B cell (primary cell): ENCODE measurements at regions of chr3 and their contacts with region 1.

Region 1: GRCh38 chr3:143414571-143415253 is 295.1 kb downstream of the CHST2 start:
- DNase-seq: no peak
- ATAC-seq: no peak
- H3K4me3 ChIP-seq: no peak overlapping the region
- H3K4me3 Mint-ChIP-seq: peak overlapping the region; percentile 18
- H3K27ac ChIP-seq: no peak overlapping the region
- H3K27ac Mint-ChIP-seq: peak overlapping the region; percentile 15
- H3K4me1 ChIP-seq: peaks cover 24 to 30% of the 10 kb centered on the region in 2 donors
- H3K4me1 Mint-ChIP-seq: peaks cover 42% of the 10 kb centered on the region
- H3K27me3 ChIP-seq: no peaks in the 10 kb centered on the region
- H3K27me3 Mint-ChIP-seq: no peaks in the 10 kb centered on the region
- CTCF ChIP-seq: no peak

Region 2: GRCh38 chr3:142925140-142925539 is 489.6 kb before region 1 on chr3:
- CTCF ChIA-PET with region 1: no interaction called
- POLR2A ChIA-PET with region 1: no interaction called
- intact Hi-C with region 1: no loop called
- DNase-seq: no peak
- ATAC-seq: no peak
- H3K4me3 ChIP-seq: no peak overlapping the region
- H3K4me3 Mint-ChIP-seq: no peak overlapping the region
- H3K27ac ChIP-seq: no peak overlapping the region
- H3K27ac Mint-ChIP-seq: no peak overlapping the region
- H3K4me1 ChIP-seq: no peaks in the 10 kb centered on the region
- H3K4me1 Mint-ChIP-seq: no peaks in the 10 kb centered on the region
- H3K27me3 ChIP-seq: peaks cover 0 to 14% (median 6%) of the 10 kb centered on the region in 4 experiments
- H3K27me3 Mint-ChIP-seq: peaks cover 49% of the 10 kb centered on the region
- CTCF ChIP-seq: no peak

Region 3: DNA sequence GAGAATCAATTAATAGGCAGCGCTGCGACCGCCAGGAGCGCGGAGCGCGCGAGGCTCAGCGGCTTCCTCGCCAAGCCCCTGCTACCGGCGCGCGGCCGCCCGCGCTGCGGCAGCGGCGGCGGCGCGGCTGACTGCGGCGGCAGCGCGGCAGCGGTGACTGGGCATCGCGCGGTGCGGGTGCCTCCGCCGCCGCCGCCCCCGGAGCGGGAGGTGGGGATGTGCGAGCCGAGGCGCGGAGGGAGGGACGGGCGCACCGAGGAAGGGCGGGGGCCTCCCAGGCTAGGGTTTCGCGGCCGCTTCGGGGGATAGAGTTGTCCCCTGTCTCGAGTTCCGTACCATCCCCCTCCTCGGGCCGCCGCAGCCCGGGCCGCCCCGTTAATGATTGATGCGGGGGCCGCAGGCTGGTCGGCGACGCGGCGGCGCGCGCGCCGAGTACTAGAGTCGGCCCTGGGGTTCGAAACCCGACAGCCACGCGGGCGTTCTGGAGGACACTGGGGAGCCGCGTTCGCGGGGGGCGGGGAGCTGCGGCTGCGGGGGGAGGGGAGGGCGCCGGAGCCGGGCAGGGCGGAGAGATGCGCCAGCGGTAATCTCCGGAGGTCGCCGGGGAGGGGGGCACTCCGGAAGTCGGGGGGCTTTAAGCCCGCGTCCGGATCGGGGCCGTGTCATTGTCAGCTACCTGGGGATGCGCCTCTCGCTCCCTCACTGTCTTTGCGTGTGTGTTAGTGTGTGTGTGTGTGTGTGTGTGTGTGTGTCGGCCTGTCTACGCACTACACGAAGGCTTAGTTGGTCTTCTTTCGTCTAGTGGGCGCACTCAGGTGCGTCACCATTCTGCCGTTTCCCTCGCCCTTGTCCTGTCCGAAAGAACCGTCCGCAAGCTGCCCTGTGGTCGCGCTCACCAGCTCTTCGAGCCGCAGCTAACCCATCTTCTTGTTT is 450.9 kb before region 1 on chr3 and contains the start of gene PAQR9:
- CTCF ChIA-PET with region 1: no interaction called
- POLR2A ChIA-PET with region 1: no interaction called
- intact Hi-C with region 1: no loop called
- DNase-seq: peak; percentile 32
- ATAC-seq: no peak
- H3K4me3 ChIP-seq: peak within 1 kb of the TSS in 3 of 5 experiments; percentile 30 to 52 (median 47)
- H3K4me3 Mint-ChIP-seq: peak within 1 kb of the TSS; percentile 88
- H3K27ac ChIP-seq: no peak within 1 kb of the TSS
- H3K27ac Mint-ChIP-seq: no peak within 1 kb of the TSS
- H3K4me1 ChIP-seq: peaks cover 8 to 10% of the 10 kb centered on the region in 2 donors
- H3K4me1 Mint-ChIP-seq: peaks cover 14% of the 10 kb centered on the region
- H3K27me3 ChIP-seq: peaks cover 0 to 33% (median 29%) of the 10 kb centered on the region in 4 experiments
- H3K27me3 Mint-ChIP-seq: peaks cover 60% of the 10 kb centered on the region
- CTCF ChIP-seq: no peak
- total RNA-seq, gene PAQR9: not detected in 2 replicates

Region 4: DNA sequence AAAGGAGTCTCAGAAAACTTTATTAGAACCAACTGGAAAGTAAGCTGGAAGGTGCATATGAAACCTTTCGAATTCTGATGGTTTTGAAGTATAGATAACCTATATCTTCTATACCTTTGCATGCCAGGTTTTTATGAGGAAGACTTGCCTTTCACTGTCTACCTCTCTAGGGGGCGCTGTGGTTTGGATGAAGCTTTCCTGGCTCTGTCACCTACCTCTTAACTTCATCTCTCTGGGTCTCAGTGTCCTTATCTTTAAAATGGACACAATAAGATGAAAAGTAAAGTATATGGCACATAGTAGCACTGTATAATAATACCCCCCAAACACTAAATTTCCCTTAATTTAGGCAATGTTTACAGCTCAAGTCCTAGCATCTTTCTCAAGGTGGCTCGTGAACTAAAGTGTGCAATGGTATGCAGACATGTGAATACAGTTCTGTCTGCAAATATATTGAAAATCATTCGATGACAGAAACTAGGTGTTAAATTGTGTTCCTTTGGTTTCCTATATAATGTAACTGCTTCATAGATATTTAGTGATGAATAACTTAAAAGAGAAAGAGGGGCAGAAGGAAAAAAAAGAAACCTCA is 19.2 kb after region 1 on chr3:
- CTCF ChIA-PET with region 1: no interaction called
- POLR2A ChIA-PET with region 1: no interaction called
- intact Hi-C with region 1: no loop called
- DNase-seq: peak; percentile 34
- ATAC-seq: no peak
- H3K4me3 ChIP-seq: no peak overlapping the region
- H3K4me3 Mint-ChIP-seq: no peak overlapping the region
- H3K27ac ChIP-seq: no peak overlapping the region
- H3K27ac Mint-ChIP-seq: no peak overlapping the region
- H3K4me1 ChIP-seq: peaks cover 17% of the 10 kb centered on the region in 2 donors
- H3K4me1 Mint-ChIP-seq: peaks cover 25% of the 10 kb centered on the region
- H3K27me3 ChIP-seq: no peaks in the 10 kb centered on the region
- H3K27me3 Mint-ChIP-seq: no peaks in the 10 kb centered on the region
- CTCF ChIP-seq: peak; percentile 58

Region 5: DNA sequence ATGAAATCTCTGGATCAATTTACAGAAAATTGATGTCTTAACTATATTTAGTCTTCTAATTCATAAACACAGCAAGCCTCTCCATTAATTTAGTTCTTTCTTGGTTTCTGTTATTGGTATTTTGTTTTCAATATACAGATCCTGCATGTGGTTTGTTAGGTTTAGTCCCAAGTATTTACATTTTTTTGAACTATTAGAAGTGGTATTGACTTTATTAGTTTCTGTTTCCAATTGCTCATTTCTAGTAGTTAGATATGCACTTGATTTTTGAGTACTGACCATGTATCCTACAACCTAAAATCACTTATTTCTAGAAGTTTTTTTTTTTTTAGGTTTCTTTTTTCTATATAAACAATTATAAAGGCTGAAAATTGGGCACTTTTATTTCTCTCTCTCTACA is 40.8 kb after region 1 on chr3:
- CTCF ChIA-PET with region 1: no interaction called
- POLR2A ChIA-PET with region 1: no interaction called
- intact Hi-C with region 1: loop called (anchors 5 kb)
- DNase-seq: no peak
- ATAC-seq: no peak
- H3K4me3 ChIP-seq: no peak overlapping the region
- H3K4me3 Mint-ChIP-seq: no peak overlapping the region
- H3K27ac ChIP-seq: no peak overlapping the region
- H3K27ac Mint-ChIP-seq: no peak overlapping the region
- H3K4me1 ChIP-seq: peaks cover 0 to 7% of the 10 kb centered on the region in 2 donors
- H3K4me1 Mint-ChIP-seq: peaks cover 11% of the 10 kb centered on the region
- H3K27me3 ChIP-seq: no peaks in the 10 kb centered on the region
- H3K27me3 Mint-ChIP-seq: no peaks in the 10 kb centered on the region
- CTCF ChIP-seq: no peak

Region 6: GRCh38 chr3:143507735-143508580 is 93.2 kb after region 1 on chr3:
- CTCF ChIA-PET with region 1: no interaction called
- POLR2A ChIA-PET with region 1: no interaction called
- intact Hi-C with region 1: loop called (anchors 5 kb)
- DNase-seq: no peak
- ATAC-seq: no peak
- H3K4me3 ChIP-seq: no peak overlapping the region
- H3K4me3 Mint-ChIP-seq: no peak overlapping the region
- H3K27ac ChIP-seq: no peak overlapping the region
- H3K27ac Mint-ChIP-seq: no peak overlapping the region
- H3K4me1 ChIP-seq: no peaks in the 10 kb centered on the region
- H3K4me1 Mint-ChIP-seq: peaks cover 3% of the 10 kb centered on the region
- H3K27me3 ChIP-seq: no peaks in the 10 kb centered on the region
- H3K27me3 Mint-ChIP-seq: no peaks in the 10 kb centered on the region
- CTCF ChIP-seq: no peak

Region 7: GRCh38 chr3:143565951-143566350 is 151.2 kb after region 1 on chr3:
- CTCF ChIA-PET with region 1: no interaction called
- POLR2A ChIA-PET with region 1: no interaction called
- intact Hi-C with region 1: no loop called
- DNase-seq: peak; percentile 17
- ATAC-seq: no peak
- H3K4me3 ChIP-seq: no peak overlapping the region
- H3K4me3 Mint-ChIP-seq: no peak overlapping the region
- H3K27ac ChIP-seq: no peak overlapping the region
- H3K27ac Mint-ChIP-seq: no peak overlapping the region
- H3K4me1 ChIP-seq: peaks cover 8 to 10% of the 10 kb centered on the region in 2 donors
- H3K4me1 Mint-ChIP-seq: peaks cover 21% of the 10 kb centered on the region
- H3K27me3 ChIP-seq: no peaks in the 10 kb centered on the region
- H3K27me3 Mint-ChIP-seq: no peaks in the 10 kb centered on the region
- CTCF ChIP-seq: no peak